ENCODE measurements at regions of chr5 and their contacts with region 1.

Region 1: DNA sequence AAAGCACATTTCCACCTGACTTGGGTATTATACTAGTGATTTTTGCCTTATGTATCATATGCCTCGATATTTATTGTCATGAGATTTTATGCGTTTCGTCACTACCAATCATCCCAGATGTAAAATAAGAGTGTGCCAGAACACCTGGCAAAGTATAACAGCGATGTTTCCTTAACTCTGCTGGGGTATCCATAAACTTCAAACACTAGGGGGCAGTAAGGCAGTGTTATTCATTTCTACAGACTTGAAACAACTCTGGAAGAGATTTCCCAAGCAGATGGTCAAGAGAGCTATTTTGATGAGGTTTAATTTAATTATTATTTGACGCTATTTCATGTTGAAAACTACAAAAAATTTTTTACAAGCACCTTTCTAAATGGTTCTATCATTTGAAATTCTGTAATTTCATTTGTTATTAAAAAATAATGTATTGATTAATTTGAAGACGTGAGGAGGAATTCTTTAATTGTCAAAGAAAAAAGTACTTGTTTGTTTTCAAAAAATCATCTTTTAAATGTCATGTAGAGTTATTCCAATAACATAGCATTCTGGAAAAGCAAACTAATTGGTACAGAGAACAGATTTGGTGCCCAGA is 388.5 kb upstream of the CTNND2 start:
- DNase-seq: peak; percentile 8 to 39 (median 10)
- ATAC-seq: no peak
- H3K4me3 ChIP-seq: no peak overlapping the region
- H3K27ac ChIP-seq: no peak overlapping the region
- H3K4me1 ChIP-seq: no peaks in the 10 kb centered on the region
- H3K27me3 ChIP-seq: no peaks in the 10 kb centered on the region
- CTCF ChIP-seq: peak in 2 of 3 experiments; percentile 38 to 43; a peak in 3 of 6 replicates
- EP300 ChIP-seq: no peak
- POLR2A ChIP-seq: no peak
- RAD21 ChIP-seq: peak; percentile 50 to 61

Region 2: DNA sequence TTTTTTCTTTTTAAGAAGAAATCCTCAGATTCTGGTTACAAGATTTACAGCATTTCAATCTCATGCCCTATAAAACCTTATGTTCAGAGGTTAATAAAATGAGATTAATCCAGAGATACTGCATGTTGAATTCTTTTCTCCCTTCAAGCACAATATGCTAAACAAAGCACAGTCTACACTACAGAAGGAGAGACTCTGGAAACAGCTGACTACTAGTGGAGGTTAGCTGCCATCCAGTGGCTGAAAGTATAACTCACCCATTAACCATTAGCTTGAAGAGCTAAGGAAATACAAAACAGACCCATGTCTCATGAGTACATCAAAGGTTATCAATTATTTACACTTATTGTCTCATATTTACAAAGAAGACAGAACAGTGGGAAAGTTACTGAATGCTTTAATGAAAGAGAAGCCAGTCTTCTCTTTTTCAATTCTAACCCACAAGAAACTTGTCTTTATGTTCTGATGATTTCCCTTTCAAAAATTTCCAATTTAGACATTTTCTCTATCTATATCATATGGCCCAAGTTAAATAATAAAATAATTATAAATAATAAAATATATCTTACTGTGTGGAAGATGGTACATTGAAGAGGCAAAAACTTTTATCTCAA is 1664.4 kb after region 1 on chr5:
- CTCF ChIA-PET with region 1: no interaction called
- POLR2A ChIA-PET with region 1: no interaction called
- in situ Hi-C with region 1: no loop called
- intact Hi-C with region 1: loop called (anchors 1 kb)
- DNase-seq: peak; percentile 27 to 52 (median 38)
- ATAC-seq: peak; percentile 89
- H3K4me3 ChIP-seq: no peak overlapping the region
- H3K27ac ChIP-seq: no peak overlapping the region
- H3K4me1 ChIP-seq: no peaks in the 10 kb centered on the region
- H3K27me3 ChIP-seq: no peaks in the 10 kb centered on the region
- CTCF ChIP-seq: peak; percentile 48 to 71 (median 60); a peak in 5 of 6 replicates
- EP300 ChIP-seq: no peak
- POLR2A ChIP-seq: no peak
- RAD21 ChIP-seq: peak; percentile 67 to 81